Thyroid gland (tissue), 4 donors: ENCODE measurements at regions of chr22 and their contacts with region 1.

Region 1: DNA sequence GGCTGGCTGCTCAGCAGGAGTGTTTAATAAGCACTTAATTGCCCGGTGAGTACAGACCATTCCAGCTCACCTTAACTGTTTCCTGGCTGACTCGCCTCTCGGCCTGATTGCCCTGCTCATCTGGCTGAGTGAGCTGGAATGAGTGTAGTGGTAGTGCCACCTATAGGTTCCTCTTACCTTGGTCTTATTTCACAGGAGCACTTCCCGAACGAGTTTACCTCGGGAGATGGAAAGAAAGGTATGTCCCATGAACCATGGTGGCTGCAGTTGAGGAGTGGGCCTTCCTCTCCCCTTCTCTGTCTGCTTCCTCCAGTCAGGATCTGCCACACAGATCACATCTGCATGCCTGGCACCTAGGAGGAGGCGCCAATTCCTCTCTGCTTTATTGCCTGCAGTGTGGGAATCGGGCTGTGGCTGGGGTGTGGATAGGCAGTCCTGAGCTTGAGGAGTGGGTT is 26.7 kb downstream of the UPB1 start:
- DNase-seq: peak; percentile 80
- H3K4me3 ChIP-seq: no peak overlapping the region
- H3K27ac ChIP-seq: no peak overlapping the region
- H3K4me1 ChIP-seq: peaks cover 4 to 9% of the 10 kb centered on the region in 2 donors
- H3K27me3 ChIP-seq: no peaks in the 10 kb centered on the region
- CTCF ChIP-seq: peak in 5 of 6 experiments; percentile 15 to 73 (median 56)
- POLR2A ChIP-seq: no peak

Region 2: GRCh38 chr22:24325105-24325757 is 196.6 kb before region 1 on chr22:
- intact Hi-C with region 1: loop called (anchors 5 kb)
- DNase-seq: no peak
- H3K4me3 ChIP-seq: no peak overlapping the region
- H3K27ac ChIP-seq: peak overlapping the region in 1 of 3 donors; percentile 19
- H3K4me1 ChIP-seq: peaks cover 0 to 4% of the 10 kb centered on the region in 2 donors
- H3K27me3 ChIP-seq: no peaks in the 10 kb centered on the region
- CTCF ChIP-seq: peak in 4 of 6 experiments; percentile 53 to 72 (median 62)
- POLR2A ChIP-seq: no peak